Body of pancreas (tissue), 4 donors: ENCODE measurements at regions of chr5 and their contacts with region 1.

Region 1: GRCh38 chr5:172044631-172045314 is 38.3 kb upstream of the FBXW11 start:
- DNase-seq: no peak
- ATAC-seq: no peak
- H3K4me3 ChIP-seq: no peak overlapping the region
- H3K27ac ChIP-seq: no peak overlapping the region
- H3K4me1 ChIP-seq: peaks cover 14% of the 10 kb centered on the region
- H3K27me3 ChIP-seq: no peaks in the 10 kb centered on the region
- CTCF ChIP-seq: no peak
- POLR2A ChIP-seq: no peak

Region 2: GRCh38 chr5:171907725-171908343 is 136.9 kb before region 1 on chr5:
- intact Hi-C with region 1: loop called (anchors 5 kb)
- DNase-seq: peak; percentile 51 to 62 (median 54)
- ATAC-seq: peak; percentile 69
- H3K4me3 ChIP-seq: no peak overlapping the region
- H3K27ac ChIP-seq: no peak overlapping the region
- H3K4me1 ChIP-seq: peaks cover 32% of the 10 kb centered on the region
- H3K27me3 ChIP-seq: no peaks in the 10 kb centered on the region
- CTCF ChIP-seq: peak; percentile 24 to 80 (median 70)
- POLR2A ChIP-seq: no peak